HEK293 (cell line): ENCODE measurements at regions of chr12 and their contacts with region 1.

Region 1: DNA sequence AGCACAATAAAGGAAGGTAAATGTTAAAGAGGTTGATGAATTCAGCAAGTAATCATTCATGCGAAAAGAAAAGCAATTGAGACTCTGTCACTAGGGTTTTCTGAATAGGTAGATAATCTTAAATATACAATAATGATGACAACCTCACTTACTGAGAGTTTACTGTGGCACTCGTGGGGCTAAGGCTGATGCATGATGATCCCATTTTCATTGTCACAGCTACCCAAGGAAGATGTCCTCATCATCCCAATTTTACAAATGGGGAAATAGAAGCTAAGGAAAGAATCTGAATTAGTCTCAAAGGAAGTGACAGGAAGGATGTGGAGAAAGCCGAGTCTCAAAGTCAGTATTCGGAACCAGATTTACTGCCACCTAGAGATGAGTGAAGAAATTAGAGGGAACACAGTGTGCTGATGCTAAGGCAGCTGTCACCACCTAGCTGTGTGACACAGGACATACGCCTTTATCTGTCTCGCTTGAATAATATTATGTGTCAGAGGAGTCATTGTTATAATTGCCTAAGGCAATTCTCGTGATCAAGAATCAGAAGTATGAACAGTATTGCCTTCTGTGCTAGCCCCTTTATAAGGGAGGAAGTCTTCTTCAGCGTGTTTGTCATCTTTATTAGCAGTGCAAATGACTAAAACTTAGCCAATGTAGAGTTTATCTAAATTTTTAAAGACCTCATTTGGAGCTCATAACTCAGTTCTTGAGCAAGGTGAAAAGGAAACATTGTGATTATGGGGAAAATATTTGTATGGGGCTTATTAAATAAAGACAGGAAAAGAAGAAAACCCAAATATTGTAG is 63.2 kb downstream of the ERGIC2 start:
- H3K4me3 ChIP-seq: no peak overlapping the region
- H3K27ac ChIP-seq: no peak overlapping the region
- H3K4me1 ChIP-seq: no peaks in the 10 kb centered on the region
- CTCF ChIP-seq: peak; percentile 87

Region 2: GRCh38 chr12:29066011-29066588 is 251.7 kb before region 1 on chr12:
- CTCF ChIA-PET with region 1: interaction called, 36 read pairs
- POLR2A ChIA-PET with region 1: no interaction called
- H3K4me3 ChIP-seq: no peak overlapping the region
- H3K27ac ChIP-seq: no peak overlapping the region
- H3K4me1 ChIP-seq: no peaks in the 10 kb centered on the region
- CTCF ChIP-seq: no peak

Region 3: DNA sequence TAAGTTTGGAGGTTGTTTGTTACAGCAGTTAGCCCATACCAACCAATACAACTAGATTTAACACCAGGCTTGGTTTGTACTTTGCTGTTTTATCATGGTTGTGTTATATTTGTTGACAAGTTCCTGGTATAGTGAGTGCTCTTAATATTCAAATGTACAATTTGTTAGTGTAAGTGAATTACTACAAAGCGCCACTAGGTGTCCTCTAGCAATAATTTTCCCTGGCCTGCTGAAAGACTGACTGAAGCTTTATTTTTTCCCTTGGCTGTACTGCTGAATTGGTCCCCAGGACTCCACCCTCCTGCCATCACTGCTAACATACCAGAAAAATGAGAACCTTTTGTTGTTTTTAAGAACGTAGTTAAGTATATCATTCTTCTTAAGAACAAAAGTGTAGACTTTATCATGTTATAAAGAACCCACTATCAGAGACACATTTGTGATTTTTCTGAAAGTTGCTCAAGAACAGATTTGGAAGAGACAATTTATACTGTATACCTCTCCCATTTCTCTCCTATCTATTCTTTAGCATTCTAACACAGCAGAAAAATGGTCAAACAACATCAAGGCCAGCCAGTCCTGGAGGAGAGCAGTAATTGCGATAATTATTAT is 244.0 kb before region 1 on chr12:
- CTCF ChIA-PET with region 1: interaction called, 36 read pairs
- POLR2A ChIA-PET with region 1: no interaction called
- H3K4me3 ChIP-seq: no peak overlapping the region
- H3K27ac ChIP-seq: no peak overlapping the region
- H3K4me1 ChIP-seq: no peaks in the 10 kb centered on the region
- CTCF ChIP-seq: no peak

Region 4: GRCh38 chr12:29088611-29089219 is 229.0 kb before region 1 on chr12:
- CTCF ChIA-PET with region 1: interaction called, 10 read pairs
- POLR2A ChIA-PET with region 1: no interaction called
- H3K4me3 ChIP-seq: no peak overlapping the region
- H3K27ac ChIP-seq: no peak overlapping the region
- H3K4me1 ChIP-seq: no peaks in the 10 kb centered on the region
- CTCF ChIP-seq: no peak

Region 5: GRCh38 chr12:29398495-29398894 is 80.7 kb after region 1 on chr12:
- CTCF ChIA-PET with region 1: no interaction called
- POLR2A ChIA-PET with region 1: no interaction called
- H3K4me3 ChIP-seq: no peak overlapping the region
- H3K27ac ChIP-seq: no peak overlapping the region
- H3K4me1 ChIP-seq: no peaks in the 10 kb centered on the region
- CTCF ChIP-seq: no peak